Activated CD8-positive, alpha-beta T cell treated with anti-CD3 and anti-CD28 coated beads, Interleukin-2, amount 10 ng/mL, durations not matched to agents 7 days and 5 days (primary cell): ENCODE measurements at regions of chr12 and their contacts with region 1.

Region 1: GRCh38 chr12:15563663-15564062 is 225.5 kb downstream of the EPS8 start:
- DNase-seq: peak; percentile 46
- ATAC-seq: peak; percentile 71
- H3K4me3 Mint-ChIP-seq: peak overlapping the region; percentile 51
- H3K27ac Mint-ChIP-seq: peak overlapping the region; percentile 91
- H3K4me1 Mint-ChIP-seq: peaks cover 57% of the 10 kb centered on the region
- H3K27me3 Mint-ChIP-seq: no peaks in the 10 kb centered on the region

Region 2: GRCh38 chr12:15546102-15546701 is 17.5 kb before region 1 on chr12:
- CTCF ChIA-PET with region 1: interaction called, 9 read pairs
- POLR2A ChIA-PET with region 1: interaction called, 10 read pairs
- DNase-seq: peak; percentile 33
- ATAC-seq: peak; percentile 82
- H3K4me3 Mint-ChIP-seq: peak overlapping the region; percentile 39
- H3K27ac Mint-ChIP-seq: peak overlapping the region; percentile 83
- H3K4me1 Mint-ChIP-seq: peaks cover 35% of the 10 kb centered on the region
- H3K27me3 Mint-ChIP-seq: no peaks in the 10 kb centered on the region

Region 3: GRCh38 chr12:15634010-15634683 is 70.5 kb after region 1 on chr12:
- CTCF ChIA-PET with region 1: no interaction called
- POLR2A ChIA-PET with region 1: no interaction called
- DNase-seq: no peak
- ATAC-seq: no peak
- H3K4me3 Mint-ChIP-seq: no peak overlapping the region
- H3K27ac Mint-ChIP-seq: no peak overlapping the region
- H3K4me1 Mint-ChIP-seq: no peaks in the 10 kb centered on the region
- H3K27me3 Mint-ChIP-seq: peaks cover 7% of the 10 kb centered on the region